Psoas muscle (tissue), 8 donors: ENCODE measurements at regions of chr11 and their contacts with region 1.

Region 1: GRCh38 chr11:118928108-118928870 is 2.6 kb upstream of the BCL9L start:
- DNase-seq: peak; percentile 91 to 96
- ATAC-seq: peak; percentile 79 to 88 (median 84)
- H3K4me3 ChIP-seq: peak overlapping the region; percentile 79
- H3K27ac ChIP-seq: peak overlapping the region; percentile 91
- H3K4me1 ChIP-seq: peaks cover 22% of the 10 kb centered on the region
- H3K27me3 ChIP-seq: no peaks in the 10 kb centered on the region
- CTCF ChIP-seq: peak; percentile 88

Region 2: DNA sequence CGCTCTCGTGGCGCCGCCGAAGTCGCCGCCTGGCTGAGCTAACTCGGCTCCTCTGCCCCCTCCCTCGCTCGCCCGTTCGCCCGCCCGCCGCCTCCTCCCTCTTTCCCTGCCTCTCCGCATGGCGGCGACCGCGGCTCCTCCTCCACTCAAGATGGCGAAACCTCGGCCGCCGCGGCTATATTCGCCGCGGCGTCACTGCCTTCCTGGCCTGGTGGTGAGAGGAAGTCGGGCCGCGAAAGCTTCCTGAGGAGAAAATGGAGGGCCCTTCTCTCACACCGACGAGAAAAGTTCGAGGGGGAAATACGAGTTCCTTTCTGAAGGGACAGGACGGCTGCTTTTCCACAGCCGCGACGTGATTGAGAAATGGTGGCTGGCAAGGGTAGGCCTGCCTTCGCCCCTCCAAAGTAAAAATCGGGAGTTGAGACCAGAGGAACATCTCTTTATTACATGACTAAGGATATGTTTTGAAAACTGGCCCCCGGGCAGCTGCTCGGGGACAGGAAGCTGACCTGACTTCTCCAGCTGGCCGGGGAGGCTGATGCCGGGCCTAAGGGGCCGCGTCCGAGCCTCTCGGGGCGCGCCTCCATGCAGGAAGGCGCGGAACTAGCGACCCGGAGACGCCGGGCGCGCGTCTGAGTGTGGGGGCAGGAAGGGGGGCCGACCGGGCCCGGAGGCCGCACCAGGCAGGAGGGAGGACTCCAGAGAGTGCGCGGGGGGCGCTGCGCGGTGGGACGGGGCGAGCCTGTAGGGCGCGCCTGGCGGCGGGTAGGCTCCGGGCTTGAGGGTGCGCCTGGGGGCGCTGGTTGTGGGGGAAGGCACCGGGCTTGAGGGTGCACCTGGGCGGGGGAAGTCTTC is 137.0 kb before region 1 on chr11 and contains the start of gene DDX6:
- intact Hi-C with region 1: loop called in 1 of 2 experiments (anchors 5 kb)
- DNase-seq: peak; percentile 92 to 96
- ATAC-seq: peak; percentile 87 to 91 (median 89)
- H3K4me3 ChIP-seq: peak within 1 kb of the TSS; percentile 89
- H3K27ac ChIP-seq: peak within 1 kb of the TSS; percentile 97
- H3K4me1 ChIP-seq: peaks cover 23% of the 10 kb centered on the region
- H3K27me3 ChIP-seq: no peaks in the 10 kb centered on the region
- CTCF ChIP-seq: peak; percentile 39
- total RNA-seq, gene DDX6: 77.6 to 90.9 (median 79.0) TPM

Region 3: DNA sequence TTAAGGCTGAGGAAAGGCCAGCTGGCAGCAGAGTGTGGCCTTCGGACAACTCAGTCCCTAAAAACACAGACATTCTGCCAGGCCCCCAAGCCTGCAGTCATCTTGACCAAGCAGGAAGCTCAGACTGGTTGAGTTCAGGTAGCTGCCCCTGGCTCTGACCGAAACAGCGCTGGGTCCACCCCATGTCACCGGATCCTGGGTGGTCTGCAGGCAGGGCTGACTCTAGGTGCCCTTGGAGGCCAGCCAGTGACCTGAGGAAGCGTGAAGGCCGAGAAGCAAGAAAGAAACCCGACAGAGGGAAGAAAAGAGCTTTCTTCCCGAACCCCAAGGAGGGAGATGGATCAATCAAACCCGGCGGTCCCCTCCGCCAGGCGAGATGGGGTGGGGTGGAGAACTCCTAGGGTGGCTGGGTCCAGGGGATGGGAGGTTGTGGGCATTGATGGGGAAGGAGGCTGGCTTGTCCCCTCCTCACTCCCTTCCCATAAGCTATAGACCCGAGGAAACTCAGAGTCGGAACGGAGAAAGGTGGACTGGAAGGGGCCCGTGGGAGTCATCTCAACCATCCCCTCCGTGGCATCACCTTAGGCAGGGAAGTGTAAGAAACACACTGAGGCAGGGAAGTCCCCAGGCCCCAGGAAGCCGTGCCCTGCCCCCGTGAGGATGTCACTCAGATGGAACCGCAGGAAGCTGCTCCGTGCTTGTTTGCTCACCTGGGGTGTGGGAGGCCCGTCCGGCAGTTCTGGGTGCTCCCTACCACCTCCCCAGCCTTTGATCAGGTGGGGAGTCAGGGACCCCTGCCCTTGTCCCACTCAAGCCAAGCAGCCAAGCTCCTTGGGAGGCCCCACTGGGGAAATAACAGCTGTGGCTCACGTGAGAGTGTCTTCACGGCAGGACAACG is 32.9 kb before region 1 on chr11:
- intact Hi-C with region 1: loop called in 1 of 2 experiments (anchors 5 kb)
- DNase-seq: peak in 1 of 2 donors; percentile 56
- ATAC-seq: no peak
- H3K4me3 ChIP-seq: no peak overlapping the region
- H3K27ac ChIP-seq: no peak overlapping the region
- H3K4me1 ChIP-seq: peaks cover 4% of the 10 kb centered on the region
- H3K27me3 ChIP-seq: no peaks in the 10 kb centered on the region
- CTCF ChIP-seq: no peak

Region 4: DNA sequence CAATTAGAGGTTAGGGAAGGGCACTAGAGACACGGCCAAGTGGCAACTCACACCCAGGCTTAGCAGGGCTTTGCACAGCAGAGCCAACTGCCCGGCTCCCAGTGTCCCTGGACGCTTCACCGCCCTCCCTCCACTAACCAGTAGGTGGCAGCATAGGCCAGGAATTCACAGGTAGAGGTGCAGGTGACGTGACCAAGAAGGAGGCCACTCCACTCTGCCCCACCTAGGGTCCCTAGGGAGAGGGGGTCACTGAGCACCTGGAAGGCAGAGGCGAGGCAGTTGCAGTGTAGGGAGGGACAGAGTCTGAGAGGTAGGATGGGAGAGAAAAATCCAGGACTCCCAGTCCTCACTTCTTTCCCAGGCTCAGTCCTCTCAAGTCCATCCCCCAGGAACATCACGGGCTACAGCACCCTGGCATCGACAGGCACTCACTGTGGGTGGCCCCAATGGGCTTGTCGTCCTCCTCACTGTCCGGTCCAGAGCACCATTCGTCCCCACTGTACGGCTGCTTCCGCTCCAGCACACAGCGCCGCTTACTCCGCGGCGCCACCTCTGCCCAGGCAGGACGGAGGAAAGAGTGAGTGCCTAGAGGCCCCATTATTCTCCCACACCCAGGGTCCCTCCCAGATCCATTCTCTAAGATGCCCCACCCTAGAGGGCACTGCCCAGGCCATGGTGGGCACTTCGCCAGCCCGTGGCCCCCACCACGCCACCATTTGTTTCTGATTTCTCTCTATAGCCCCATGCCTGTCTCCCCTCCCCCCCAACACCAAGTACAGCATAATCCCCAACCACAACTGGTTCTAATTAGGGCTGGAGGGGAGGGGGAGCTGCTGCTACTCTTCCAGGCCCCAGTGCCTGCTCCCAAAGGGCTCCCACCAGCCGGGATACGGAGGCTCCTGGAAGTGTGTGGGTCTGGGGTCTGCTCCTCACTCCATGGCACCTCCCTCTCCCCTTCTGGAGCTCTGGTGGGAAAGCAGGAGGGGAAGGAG is 20.9 kb before region 1 on chr11:
- intact Hi-C with region 1: loop called (anchors 1 kb)
- DNase-seq: peak; percentile 83 to 92
- ATAC-seq: peak; percentile 36 to 61 (median 54)
- H3K4me3 ChIP-seq: peak overlapping the region; percentile 16
- H3K27ac ChIP-seq: peak overlapping the region; percentile 46
- H3K4me1 ChIP-seq: peaks cover 48% of the 10 kb centered on the region
- H3K27me3 ChIP-seq: no peaks in the 10 kb centered on the region
- CTCF ChIP-seq: peak; percentile 94

Region 5: DNA sequence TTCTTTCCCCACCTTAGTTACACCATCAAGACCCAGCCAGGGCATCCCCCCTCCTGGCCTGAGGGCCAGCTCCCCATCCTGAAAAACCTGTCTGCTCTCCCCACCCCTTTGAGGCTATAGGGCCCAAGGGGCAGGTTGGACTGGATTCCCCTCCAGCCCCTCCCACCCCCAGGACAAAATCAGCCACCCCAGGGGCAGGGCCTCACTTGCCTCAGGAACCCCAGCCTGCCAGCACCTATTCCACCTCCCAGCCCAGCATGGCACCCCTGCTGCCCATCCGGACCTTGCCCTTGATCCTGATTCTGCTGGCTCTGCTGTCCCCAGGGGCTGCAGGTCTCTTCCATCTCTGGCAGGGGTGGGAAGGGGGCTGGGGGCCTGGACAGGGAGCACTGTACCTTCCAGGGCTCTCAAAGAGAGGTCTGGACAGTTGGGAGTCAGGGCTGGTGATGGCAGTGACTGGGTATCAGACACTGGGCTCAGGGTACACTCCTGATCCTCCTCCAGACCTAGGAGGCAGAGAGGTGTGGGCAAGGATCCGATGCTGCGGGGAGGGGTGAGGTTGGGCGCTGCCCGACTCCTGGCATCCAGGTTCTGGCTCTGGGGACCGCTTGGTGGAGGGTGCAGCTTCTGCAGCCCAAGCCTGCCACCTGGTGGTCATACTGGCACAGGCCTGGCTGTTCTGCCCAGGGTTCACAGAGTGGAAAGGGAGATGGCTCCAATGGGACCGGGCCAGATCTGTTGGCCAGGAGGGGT is 28.0 kb after region 1 on chr11 and contains the start of gene UPK2:
- intact Hi-C with region 1: loop called in 1 of 2 experiments (anchors 2 kb)
- DNase-seq: peak; percentile 88 to 95
- ATAC-seq: peak; percentile 97 to 100 (median 99)
- H3K4me3 ChIP-seq: no peak within 1 kb of the TSS
- H3K27ac ChIP-seq: no peak within 1 kb of the TSS
- H3K4me1 ChIP-seq: no peaks in the 10 kb centered on the region
- H3K27me3 ChIP-seq: peaks cover 0 to 5% (median 3%) of the 10 kb centered on the region in 3 donors
- CTCF ChIP-seq: peak; percentile 94
- total RNA-seq, gene UPK2: not detected

Region 6: GRCh38 chr11:119018074-119018938 is 90.0 kb after region 1 on chr11 and contains the starts of genes RPS25 and TRAPPC4:
- intact Hi-C with region 1: loop called in 1 of 2 experiments (anchors 5 kb)
- DNase-seq: peak; percentile 96 to 97
- ATAC-seq: peak; percentile 93 to 95 (median 94)
- H3K4me3 ChIP-seq: peak within 1 kb of the TSS; percentile 88
- H3K27ac ChIP-seq: peak within 1 kb of the TSS; percentile 94
- H3K4me1 ChIP-seq: peaks cover 48% of the 10 kb centered on the region
- H3K27me3 ChIP-seq: no peaks in the 10 kb centered on the region
- CTCF ChIP-seq: no peak
- total RNA-seq, gene RPS25: 1,024 to 1,264 (median 1,219) TPM
- total RNA-seq, gene TRAPPC4: 46.1 to 61.5 (median 56.8) TPM